GM12878 (cell line): ENCODE measurements at regions of chr5 and their contacts with region 1.

Region 1: DNA sequence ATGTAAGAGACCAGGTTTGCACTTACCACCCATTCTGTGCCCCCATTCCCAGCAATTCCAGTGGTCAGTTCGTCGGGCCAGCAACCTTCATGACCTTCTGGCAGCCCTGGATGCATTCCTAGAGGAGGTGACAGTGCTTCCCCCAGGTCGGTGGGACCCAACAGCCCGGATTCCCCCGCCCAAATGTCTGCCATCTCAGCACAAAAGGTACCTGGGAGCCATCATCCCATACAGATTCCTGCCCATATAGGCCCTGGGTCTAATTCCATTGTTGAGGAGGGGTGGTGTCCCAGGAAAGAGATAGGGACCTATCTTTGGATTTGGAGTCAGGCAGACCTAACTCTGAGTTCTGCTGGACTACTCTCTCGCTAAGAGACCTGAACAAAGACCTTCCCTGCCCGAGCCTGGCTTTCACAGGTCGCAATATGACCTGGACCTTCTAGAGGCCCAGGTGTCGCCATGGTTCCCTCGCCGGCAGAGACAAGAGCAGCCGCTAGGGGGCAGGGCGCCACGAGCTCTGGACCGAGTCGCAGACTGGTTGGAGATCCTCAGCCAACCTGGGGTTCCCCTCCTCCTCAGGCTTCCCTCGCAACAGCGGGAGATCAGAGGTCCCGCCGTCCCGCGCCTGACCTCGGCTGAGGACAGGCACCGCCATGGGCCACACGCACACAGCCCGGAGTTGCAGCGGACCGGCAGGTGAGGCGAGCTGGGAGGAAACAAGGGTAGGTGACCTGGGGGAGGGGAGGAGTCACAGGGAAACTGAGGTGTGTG is 3.1 kb downstream of the SLC4A9 start:
- DNase-seq: no peak
- ATAC-seq: peak; percentile 97
- H3K4me3 ChIP-seq: peak overlapping the region; percentile 57; the same call in 1 of the 2 replicates
- H3K27ac ChIP-seq: no peak overlapping the region
- H3K4me1 ChIP-seq: no peaks in the 10 kb centered on the region; the same call in 1 of the 2 replicates
- H3K27me3 ChIP-seq: no peaks in the 10 kb centered on the region
- CTCF ChIP-seq: peak; percentile 96 to 97 (median 96)
- EP300 ChIP-seq: no peak
- POLR2A ChIP-seq: no peak
- RAD21 ChIP-seq: peak; percentile 72

Region 2: DNA sequence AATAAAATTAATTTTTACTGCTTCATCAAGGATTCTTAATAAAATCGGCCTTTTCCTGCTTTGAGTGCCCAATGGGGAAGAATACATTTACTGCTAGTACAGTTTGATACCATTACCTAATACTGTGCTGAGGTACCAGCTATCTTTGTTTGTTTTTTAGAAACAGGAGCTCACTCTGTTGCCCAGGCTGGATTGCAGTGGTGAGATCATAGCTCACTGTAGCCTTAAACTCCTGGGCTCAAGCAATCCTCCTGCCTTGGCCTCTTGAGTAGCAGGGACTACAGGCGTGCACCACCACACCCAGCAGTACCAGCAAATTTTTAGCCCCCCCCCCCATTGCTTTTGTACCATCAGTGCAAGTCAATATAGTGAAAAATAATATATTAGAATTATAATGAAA is 25.0 kb after region 1 on chr5:
- CTCF ChIA-PET with region 1: interaction called, 10 read pairs
- POLR2A ChIA-PET with region 1: no interaction called
- RAD21 ChIA-PET with region 1: no interaction called
- SMC1A ChIA-PET with region 1: no interaction called
- in situ Hi-C with region 1: no loop called
- intact Hi-C with region 1: no loop called
- DNase-seq: no peak
- ATAC-seq: no peak
- H3K4me3 ChIP-seq: no peak overlapping the region
- H3K27ac ChIP-seq: no peak overlapping the region
- H3K4me1 ChIP-seq: no peaks in the 10 kb centered on the region
- H3K27me3 ChIP-seq: no peaks in the 10 kb centered on the region
- CTCF ChIP-seq: no peak
- EP300 ChIP-seq: no peak
- POLR2A ChIP-seq: no peak
- RAD21 ChIP-seq: no peak

Region 3: DNA sequence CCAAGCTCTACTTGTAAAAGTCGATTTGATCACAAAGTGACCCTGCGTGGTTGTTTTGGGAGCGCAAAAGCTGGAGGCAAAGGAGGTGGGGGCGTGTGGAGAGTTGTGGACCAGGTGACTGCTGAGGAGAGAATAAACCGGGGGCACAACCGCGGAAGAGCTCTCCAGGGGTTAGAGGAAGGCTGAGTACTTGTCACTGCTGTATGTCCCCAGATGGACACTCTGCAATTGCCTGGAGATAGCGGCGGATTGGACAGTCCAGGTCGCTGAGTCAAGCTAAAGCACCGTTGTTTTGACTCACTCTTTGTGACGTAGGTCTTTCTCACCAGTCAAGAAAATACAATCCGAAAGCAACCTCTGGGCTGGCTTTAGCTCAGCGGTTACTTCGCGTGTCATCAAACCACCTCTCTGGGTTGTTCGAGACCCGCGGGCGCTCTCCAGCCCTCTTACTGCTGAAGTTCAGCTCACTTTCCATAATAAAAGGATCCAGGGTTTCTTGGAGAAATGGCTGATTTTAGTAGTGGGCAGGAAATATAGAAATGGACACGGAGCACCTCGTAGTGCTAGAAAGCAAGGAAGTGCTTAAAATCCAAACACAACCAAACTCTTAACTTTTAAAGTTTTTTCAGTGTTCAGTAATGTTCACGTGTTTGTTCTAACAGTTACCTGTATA is 362.9 kb after region 1 on chr5:
- CTCF ChIA-PET with region 1: interaction called, 6 read pairs
- POLR2A ChIA-PET with region 1: no interaction called
- RAD21 ChIA-PET with region 1: interaction called, 34 read pairs
- SMC1A ChIA-PET with region 1: interaction called, 3 read pairs
- in situ Hi-C with region 1: no loop called
- intact Hi-C with region 1: loop called (anchors 2 kb)
- DNase-seq: peak; percentile 81
- ATAC-seq: peak; percentile 98
- H3K4me3 ChIP-seq: peak overlapping the region; percentile 66
- H3K27ac ChIP-seq: no peak overlapping the region
- H3K4me1 ChIP-seq: no peaks in the 10 kb centered on the region
- H3K27me3 ChIP-seq: no peaks in the 10 kb centered on the region
- CTCF ChIP-seq: no peak
- EP300 ChIP-seq: peak in 1 of 2 experiments; percentile 53; a peak in 1 of 4 replicates
- POLR2A ChIP-seq: no peak
- RAD21 ChIP-seq: no peak